AG04449 (cell line): ENCODE measurements at regions of chr1 and their contacts with region 1.

Region 1: DNA sequence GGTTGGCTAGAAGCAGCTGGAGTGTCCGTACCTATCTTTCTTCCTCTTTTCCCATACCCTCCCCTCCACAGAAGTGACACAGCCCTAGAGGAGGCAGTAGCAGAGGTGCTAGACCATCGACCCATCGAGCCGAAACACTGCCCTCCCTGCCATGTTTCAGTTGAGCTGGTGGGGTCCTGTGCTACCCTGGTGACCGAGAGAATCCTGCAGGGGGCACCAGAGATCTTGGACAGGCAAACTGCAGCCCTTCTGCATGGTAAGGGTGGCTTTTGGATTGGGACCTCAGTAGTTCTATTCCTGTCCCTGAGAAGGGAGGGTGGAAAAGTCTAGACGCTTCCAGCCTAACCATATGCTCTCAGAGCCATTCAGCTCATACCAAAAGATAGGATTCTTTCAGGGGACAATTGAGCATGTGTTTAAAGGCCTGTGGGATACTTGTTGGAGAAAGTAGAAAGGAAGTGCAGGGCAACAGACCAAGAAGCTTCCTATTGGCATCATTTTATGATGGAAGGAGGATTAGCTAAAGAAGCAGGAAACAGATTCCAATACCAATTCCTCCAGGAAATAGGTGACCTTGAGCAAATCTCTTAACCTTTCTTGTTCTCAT is 11.7 kb upstream of the BNIPL start:
- DNase-seq: no peak
- H3K4me3 ChIP-seq: no peak overlapping the region
- CTCF ChIP-seq: peak; percentile 79

Region 2: DNA sequence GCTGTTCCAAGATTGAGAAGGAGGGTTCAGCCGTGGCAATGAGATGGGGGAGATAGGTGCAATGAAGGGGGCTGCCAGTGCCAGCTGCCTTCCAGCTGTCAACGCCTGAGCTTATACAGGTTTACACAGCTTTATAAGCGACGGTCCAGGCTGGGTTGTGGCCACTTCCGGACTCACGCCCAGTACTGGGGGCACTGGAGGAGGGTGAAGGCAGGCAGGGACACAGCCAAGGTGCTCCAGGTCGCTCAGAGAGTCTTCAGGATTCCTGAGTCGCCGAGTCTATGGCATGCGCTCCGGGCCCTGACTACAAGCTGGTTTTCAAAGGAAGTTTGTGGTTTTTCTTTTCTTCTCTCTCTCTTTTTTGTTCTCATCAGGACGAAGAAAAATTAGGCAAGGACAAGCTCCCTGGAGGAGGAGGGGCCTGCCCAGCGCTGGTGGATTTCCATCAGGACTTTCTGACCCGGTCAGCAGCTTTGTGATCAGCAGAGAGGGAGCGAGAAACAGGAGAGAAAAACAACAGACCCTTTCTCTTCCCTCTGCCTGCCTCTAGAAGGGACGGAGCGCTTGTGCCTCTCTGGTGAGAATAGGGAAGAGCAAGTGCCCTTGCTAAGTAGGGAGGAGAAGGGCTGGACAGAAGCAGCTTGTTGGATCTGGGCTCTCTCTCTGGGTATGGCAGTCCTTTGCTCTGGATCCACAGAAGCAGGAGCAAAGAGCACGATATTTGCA is 18.2 kb before region 1 on chr1 and contains the start of gene MINDY1:
- CTCF ChIA-PET with region 1: interaction called, 11 read pairs
- POLR2A ChIA-PET with region 1: no interaction called
- DNase-seq: no peak
- H3K4me3 ChIP-seq: peak within 1 kb of the TSS; percentile 71
- CTCF ChIP-seq: peak; percentile 80

Region 3: GRCh38 chr1:151013518-151013917 is 11.1 kb before region 1 on chr1:
- CTCF ChIA-PET with region 1: interaction called, 11 read pairs
- POLR2A ChIA-PET with region 1: no interaction called
- DNase-seq: no peak
- H3K4me3 ChIP-seq: no peak overlapping the region
- CTCF ChIP-seq: no peak

Region 4: GRCh38 chr1:151036363-151036762 is 11.7 kb after region 1 on chr1 and contains the start of gene BNIPL:
- CTCF ChIA-PET with region 1: interaction called, 15 read pairs
- POLR2A ChIA-PET with region 1: no interaction called
- DNase-seq: no peak
- H3K4me3 ChIP-seq: no peak within 1 kb of the TSS
- CTCF ChIP-seq: no peak

Region 5: GRCh38 chr1:151047925-151048645 is 23.4 kb after region 1 on chr1:
- CTCF ChIA-PET with region 1: interaction called, 19 read pairs
- POLR2A ChIA-PET with region 1: no interaction called
- DNase-seq: no peak
- H3K4me3 ChIP-seq: peak overlapping the region; percentile 74
- CTCF ChIP-seq: peak; percentile 50

Region 6: GRCh38 chr1:151156515-151156819 is 131.8 kb after region 1 on chr1 and contains the start of gene TNFAIP8L2:
- CTCF ChIA-PET with region 1: interaction called, 11 read pairs
- POLR2A ChIA-PET with region 1: no interaction called
- DNase-seq: no peak
- H3K4me3 ChIP-seq: no peak within 1 kb of the TSS
- CTCF ChIP-seq: no peak